Heart left ventricle (tissue), 16 donors: ENCODE measurements at regions of chr9 and their contacts with region 1.

Region 1: DNA sequence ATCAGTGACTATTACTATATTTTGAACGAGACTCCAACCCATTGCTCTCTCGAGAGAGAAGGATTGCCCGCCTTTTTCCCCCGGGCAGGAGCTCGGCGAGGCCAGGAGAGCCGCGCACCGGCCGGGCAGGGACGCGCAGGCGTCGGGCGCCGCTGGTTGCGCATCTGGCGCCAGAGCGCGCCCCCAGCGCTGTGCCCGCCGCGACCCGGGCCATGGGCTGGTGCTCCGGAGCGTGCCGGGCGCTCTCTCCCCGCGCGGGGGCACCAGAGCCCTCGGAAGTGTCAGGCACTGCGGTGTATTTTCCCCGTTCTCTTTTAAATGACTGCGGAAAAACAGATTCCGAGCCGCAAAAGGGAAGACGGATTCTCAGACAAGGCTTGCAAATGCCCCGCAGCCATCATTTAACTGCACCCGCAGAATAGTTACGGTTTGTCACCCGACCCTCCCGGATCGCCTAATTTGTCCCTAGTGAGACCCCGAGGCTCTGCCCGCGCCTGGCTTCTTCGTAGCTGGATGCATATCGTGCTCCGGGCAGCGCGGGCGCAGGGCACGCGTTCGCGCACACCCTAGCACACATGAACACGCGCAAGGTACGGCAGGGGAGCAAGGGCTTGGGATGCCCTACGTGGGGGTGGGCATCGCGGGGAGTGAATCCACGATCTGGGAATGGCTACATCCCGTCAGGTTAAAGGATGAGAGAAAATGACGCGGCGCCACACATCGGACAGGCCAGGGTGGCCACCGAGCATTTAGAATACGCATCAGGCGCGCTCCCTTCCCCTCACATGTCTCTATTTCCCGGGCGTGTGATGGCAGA is 1.1 kb upstream of the NTRK2 start:
- DNase-seq: peak; percentile 51 to 78 (median 68)
- ATAC-seq: peak; percentile 71 to 94 (median 92)
- H3K4me3 ChIP-seq: peak overlapping the region; percentile 24 to 65 (median 54)
- H3K27ac ChIP-seq: peak overlapping the region in 3 of 12 donors; percentile 8 to 41 (median 24)
- H3K4me1 ChIP-seq: peaks cover 0 to 34% (median 11%) of the 10 kb centered on the region in 12 donors
- H3K27me3 ChIP-seq: peaks cover 0 to 49% (median 16%) of the 10 kb centered on the region in 9 donors
- CTCF ChIP-seq: peak; percentile 28 to 75 (median 58)
- POLR2A ChIP-seq: no peak

Region 2: GRCh38 chr9:84600739-84601138 is 67.7 kb before region 1 on chr9:
- intact Hi-C with region 1: loop called in 1 of 10 experiments (anchors 10 kb)
- DNase-seq: no peak
- ATAC-seq: no peak
- H3K4me3 ChIP-seq: no peak overlapping the region
- H3K27ac ChIP-seq: no peak overlapping the region
- H3K4me1 ChIP-seq: no peaks in the 10 kb centered on the region
- H3K27me3 ChIP-seq: peaks cover 0 to 4% (median 0%) of the 10 kb centered on the region in 9 donors
- CTCF ChIP-seq: no peak
- POLR2A ChIP-seq: no peak

Region 3: DNA sequence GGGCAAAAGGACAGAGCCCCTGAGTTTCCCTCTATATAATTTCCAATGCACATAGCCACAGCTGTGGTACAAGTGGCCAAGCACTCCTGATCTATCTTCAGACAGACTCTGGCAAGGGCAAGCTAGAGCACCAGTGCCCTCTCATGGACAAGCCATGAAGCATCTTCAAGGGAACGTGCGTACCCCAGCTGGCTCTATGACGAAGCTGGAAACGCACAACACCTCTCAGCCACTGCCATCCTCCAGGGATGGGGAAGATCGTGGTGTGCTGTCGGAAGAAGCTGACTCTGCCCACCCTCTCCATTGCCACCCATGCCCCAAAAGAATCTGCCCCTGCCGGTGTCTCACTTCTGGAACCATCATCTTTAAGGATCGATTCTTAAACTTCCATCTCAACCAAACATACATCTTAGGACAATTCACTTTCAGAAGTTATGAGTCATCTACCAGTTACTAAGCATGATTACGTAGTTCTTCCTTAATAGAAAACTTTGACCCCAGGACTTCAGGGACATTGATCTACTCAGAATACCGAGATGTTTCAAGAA is 590.5 kb after region 1 on chr9:
- intact Hi-C with region 1: loop called in 1 of 10 experiments (anchors 10 kb)
- DNase-seq: peak in 4 of 5 donors; percentile 22 to 53 (median 45)
- ATAC-seq: peak; percentile 77 to 88 (median 87)
- H3K4me3 ChIP-seq: no peak overlapping the region
- H3K27ac ChIP-seq: no peak overlapping the region
- H3K4me1 ChIP-seq: peaks cover 0 to 6% (median 0%) of the 10 kb centered on the region in 12 donors
- H3K27me3 ChIP-seq: peaks cover 0 to 7% (median 0%) of the 10 kb centered on the region in 9 donors
- CTCF ChIP-seq: peak; percentile 42 to 74 (median 67)
- POLR2A ChIP-seq: no peak